Ovary (tissue), 10 donors: ENCODE measurements at regions of chr13 and their contacts with region 1.

Region 1: DNA sequence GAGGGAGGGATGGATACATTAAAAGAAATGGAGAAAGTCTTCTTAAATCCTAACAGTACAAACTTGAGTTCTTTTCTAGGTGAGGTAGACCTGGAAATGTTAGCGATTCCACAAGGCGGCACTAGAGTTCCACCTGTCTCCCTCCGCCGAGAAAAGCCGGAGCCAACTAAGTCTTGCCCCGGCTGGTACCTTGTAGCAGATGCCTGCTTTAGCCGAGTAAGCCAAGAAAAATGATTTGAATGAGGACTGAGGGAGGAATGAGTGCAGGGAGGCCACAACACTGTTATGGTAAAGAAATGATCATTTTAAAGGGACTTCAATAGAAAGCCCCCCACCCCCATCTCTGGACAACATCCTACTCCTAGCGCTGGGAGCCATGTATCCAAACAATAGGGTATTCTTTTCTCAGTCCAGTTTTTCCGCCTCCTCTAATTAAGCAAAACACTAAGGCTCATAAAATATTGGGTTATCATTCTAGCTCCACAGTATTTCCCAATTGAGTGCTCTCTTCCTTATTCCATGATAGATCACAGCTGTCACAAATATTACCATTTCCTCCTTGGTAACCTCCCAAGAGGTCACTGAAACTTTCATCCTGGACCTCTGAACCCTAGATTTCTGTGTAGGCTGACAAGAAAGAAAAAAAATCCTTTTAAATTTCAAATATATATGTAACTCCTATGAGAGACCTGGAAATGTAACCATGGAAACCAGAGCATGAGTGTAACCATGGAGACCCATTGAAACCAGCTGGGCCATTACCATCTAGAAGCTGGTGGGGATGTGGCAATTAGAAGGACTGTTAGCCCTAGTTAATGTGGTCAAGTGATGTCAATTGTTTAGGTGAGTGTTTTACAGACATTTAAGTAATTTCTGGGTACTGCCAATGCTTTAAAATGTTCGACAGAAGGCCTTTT is 58.3 kb downstream of the GPALPP1 start:
- DNase-seq: peak; percentile 59 to 79 (median 74)
- H3K4me3 ChIP-seq: peak overlapping the region; percentile 15
- H3K27ac ChIP-seq: no peak overlapping the region
- H3K4me1 ChIP-seq: no peaks in the 10 kb centered on the region
- H3K27me3 ChIP-seq: no peaks in the 10 kb centered on the region
- CTCF ChIP-seq: peak; percentile 57 to 83 (median 82)
- EP300 ChIP-seq: no peak
- POLR2A ChIP-seq: no peak

Region 2: GRCh38 chr13:45297456-45298205 is 250.0 kb after region 1 on chr13:
- intact Hi-C with region 1: loop called in 1 of 4 experiments (anchors 5 kb)
- DNase-seq: no peak
- H3K4me3 ChIP-seq: no peak overlapping the region
- H3K27ac ChIP-seq: no peak overlapping the region
- H3K4me1 ChIP-seq: no peaks in the 10 kb centered on the region
- H3K27me3 ChIP-seq: no peaks in the 10 kb centered on the region
- CTCF ChIP-seq: no peak
- EP300 ChIP-seq: no peak
- POLR2A ChIP-seq: no peak

Region 3: DNA sequence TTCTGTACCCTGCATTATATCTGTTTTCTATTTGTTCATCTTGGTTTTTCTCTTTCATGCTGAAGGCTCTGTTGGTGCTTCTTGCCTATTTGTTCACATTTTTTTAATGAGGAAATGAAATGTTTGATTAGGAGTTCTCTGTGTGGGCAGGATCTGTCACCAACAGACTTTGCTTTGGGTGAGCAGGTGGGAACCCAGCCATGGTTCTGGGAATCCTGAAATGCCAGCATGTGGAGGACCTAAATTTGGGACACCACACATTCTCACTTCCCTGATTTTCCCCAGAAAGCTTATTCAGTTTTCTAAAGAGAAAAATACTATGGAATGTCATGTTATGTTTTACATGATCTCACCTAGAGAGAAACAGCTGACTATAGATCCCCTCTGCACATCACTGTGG is 259.3 kb after region 1 on chr13:
- intact Hi-C with region 1: loop called in 3 of 4 experiments (anchors 5 kb)
- DNase-seq: no peak
- H3K4me3 ChIP-seq: no peak overlapping the region
- H3K27ac ChIP-seq: no peak overlapping the region
- H3K4me1 ChIP-seq: no peaks in the 10 kb centered on the region
- H3K27me3 ChIP-seq: no peaks in the 10 kb centered on the region
- CTCF ChIP-seq: no peak
- EP300 ChIP-seq: no peak
- POLR2A ChIP-seq: no peak